ENCODE measurements at regions of chr11 and their contacts with region 1.

Region 1: DNA sequence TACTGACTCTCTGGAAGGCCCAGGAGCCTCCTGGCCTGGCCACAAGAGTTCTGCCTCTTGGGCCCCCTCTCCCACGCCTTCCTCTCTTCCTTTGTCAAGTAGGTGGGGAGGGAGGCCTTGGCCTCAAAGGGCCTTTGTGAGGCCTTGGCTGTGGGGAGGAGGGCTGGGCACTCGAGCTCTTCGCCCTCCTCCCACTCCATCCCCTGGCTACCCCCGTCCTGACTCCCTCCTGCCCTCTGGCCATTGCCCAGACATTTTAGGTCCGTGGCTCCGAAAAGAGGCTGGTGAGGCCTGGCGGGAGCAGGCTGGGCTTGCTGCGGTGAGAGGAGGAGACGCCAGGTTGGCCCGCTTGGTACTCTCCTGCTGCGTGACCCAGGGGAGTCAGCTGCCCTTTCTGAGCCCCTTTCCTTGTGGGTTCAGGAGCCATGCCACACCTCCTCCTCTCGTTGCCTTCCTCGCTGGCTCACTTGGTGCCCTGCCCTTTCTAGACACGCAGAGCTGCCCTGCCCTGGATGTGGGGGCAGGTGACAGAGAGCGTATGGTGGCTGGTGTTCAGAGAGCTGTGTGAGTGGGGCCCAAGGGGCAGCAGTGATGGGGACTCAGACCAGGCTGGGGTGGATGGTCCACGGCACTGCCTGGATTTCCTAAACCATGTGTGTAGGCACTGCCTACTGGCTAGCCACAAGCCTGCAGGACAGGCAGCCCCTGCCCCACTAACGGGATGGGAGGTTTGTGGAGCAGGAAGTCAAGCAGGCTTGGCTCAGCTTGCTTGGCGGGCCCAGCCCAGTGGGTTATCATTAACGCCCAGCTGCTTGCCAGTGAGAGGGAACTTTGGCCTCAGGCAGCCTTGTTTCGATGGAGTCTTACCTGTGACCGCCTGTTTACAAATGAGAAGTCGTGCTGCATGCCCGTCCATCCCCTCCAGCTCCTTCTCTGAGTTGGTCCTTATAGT is 15.8 kb upstream of the OMP start:
- DNase-seq: no peak
- H3K4me3 ChIP-seq: no peak overlapping the region
- H3K27ac ChIP-seq: peak overlapping the region in 3 of 4 donors; percentile 4 to 31 (median 30)
- H3K4me1 ChIP-seq: peaks cover 16 to 39% (median 26%) of the 10 kb centered on the region in 4 donors
- H3K27me3 ChIP-seq: no peaks in the 10 kb centered on the region
- CTCF ChIP-seq: no peak
- EP300 ChIP-seq: no peak
- POLR2A ChIP-seq: no peak

Region 2: GRCh38 chr11:76131671-76132631 is 954.8 kb before region 1 on chr11:
- intact Hi-C with region 1: no loop called
- DNase-seq: no peak
- H3K4me3 ChIP-seq: no peak overlapping the region
- H3K27ac ChIP-seq: peak overlapping the region; percentile 3 to 45 (median 30)
- H3K4me1 ChIP-seq: peaks cover 25 to 33% (median 33%) of the 10 kb centered on the region in 4 donors
- H3K27me3 ChIP-seq: no peaks in the 10 kb centered on the region
- CTCF ChIP-seq: no peak
- EP300 ChIP-seq: no peak
- POLR2A ChIP-seq: no peak

Region 3: DNA sequence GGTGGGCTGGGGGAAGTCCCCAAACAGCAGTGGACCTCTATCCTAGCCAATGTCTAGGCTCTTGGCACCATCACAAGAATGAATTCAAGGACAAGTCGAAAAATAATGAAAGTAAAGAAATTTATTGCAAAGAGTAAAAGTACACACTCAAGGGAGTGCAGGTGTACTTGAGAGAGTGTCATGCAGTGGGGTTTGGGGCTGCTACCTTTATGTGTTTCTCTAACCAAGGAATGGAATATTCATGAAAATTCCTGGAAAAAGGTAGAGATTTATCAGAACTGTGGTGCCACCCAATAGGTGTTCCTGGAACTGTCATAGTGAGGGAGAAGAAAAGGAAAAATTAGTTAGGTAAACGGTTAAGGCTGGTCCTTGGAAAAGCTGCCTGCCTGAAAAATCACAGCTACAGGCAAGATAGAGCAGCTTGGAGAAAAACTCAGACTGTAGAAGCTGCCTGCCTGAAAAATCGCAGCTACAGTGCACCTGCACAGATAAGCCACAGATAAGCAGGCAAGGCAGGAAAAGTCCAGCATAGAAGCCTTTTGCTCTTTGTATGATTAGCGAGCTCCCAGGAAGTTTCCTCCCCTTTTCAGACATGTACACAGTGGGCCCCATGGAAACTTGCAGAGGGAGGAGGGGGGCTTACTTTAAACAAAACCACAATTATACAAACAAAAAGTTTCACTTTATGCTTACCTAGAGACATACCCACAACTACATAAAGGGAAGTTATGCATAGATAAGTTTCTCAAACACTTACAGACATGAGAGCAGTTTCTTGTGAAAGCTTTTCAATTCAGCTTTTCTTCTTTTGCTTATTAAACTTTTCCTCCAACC is 124.0 kb before region 1 on chr11:
- intact Hi-C with region 1: no loop called
- DNase-seq: no peak
- H3K4me3 ChIP-seq: no peak overlapping the region
- H3K27ac ChIP-seq: no peak overlapping the region
- H3K4me1 ChIP-seq: no peaks in the 10 kb centered on the region
- H3K27me3 ChIP-seq: no peaks in the 10 kb centered on the region
- CTCF ChIP-seq: no peak
- EP300 ChIP-seq: no peak
- POLR2A ChIP-seq: no peak

Region 4: DNA sequence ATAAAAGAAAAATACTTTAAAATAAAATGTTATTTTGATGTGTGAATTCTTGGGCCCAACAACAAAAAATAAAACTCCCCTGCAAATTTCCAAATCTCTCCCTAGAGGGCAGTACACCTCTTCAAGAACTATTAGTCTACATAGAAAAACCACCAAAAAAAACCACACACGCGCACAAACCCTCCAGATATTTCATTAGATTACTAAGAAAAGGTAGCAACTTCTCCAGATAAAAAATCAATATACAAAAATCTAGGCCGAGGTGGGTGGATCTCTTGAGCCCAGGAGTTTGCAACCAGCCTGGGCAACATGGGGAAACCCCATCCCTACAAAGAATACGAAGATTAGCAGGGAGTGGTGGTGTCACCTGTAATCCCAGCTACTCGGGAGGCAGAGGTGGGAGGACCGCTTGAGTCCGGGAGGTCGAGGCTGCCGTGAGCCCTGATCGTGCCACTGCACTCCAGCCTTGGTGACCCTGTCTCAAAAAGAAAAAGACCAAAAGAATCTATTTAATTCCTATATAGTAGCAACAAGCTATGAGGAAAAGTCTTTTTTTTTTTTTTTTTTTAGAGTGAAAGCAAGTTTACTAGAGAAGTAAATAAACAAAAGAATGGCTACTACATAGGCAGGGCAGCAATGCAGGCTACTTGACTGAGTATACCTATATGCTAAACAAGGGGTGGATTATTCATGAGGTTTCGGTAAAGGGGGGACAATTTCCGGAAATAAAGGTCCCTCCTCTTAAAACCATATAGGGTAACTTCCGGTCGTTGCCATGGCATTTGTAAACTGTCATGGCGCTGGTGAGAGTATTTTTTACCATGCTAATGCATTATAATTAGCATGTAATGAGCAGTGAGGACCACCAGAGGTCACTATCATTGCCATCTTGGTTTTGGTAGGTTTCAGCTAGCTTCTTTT is 39.5 kb before region 1 on chr11:
- intact Hi-C with region 1: loop called (anchors 1 kb)
- DNase-seq: no peak
- H3K4me3 ChIP-seq: peak overlapping the region; percentile 39 to 51 (median 45)
- H3K27ac ChIP-seq: peak overlapping the region in 1 of 4 donors; percentile 54
- H3K4me1 ChIP-seq: peaks cover 0 to 13% (median 11%) of the 10 kb centered on the region in 4 donors
- H3K27me3 ChIP-seq: peaks cover 0 to 33% (median 11%) of the 10 kb centered on the region in 4 donors
- CTCF ChIP-seq: peak; percentile 73 to 81 (median 75)
- EP300 ChIP-seq: no peak
- POLR2A ChIP-seq: no peak

Measured in esophagus muscularis mucosa (tissue), 4 donors.